GM12878 (cell line): ENCODE measurements at regions of chr1 and their contacts with region 1.

Region 1: DNA sequence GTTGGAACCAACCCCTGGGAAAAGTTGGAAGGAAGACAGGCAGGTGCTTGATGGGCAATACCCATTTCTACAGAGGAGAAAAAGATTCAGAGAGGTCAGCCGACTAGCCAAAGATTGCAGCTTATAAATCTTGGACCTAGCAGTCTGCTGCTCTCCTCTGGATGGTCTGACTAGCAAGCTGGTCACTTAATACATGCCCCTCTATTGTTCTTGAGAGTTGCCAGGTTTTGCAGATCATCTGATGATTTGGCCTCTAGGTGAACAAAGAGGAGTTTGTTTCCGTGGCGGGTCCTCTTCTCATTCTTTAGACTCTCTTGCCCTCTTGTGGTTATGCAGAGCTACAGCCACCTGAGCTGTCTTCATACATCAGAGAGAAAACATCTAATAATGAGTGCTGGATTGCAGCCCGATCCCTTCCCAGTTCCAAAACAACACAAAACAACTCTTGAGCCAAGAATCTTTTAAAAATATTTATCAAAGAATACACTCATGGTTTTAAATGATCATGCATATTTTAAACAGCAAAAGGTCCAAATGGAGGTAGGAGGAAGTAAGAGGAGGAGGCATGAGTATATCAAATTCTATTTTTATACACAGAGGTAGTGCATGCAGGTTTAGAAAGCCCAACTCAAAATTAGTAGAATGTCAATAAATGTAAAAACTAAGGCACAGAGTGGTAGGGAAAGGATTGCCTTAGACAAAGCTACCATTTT is 115.7 kb downstream of the SLC30A10 start:
- DNase-seq: no peak
- ATAC-seq: peak; percentile 96
- H3K4me3 ChIP-seq: no peak overlapping the region
- H3K27ac ChIP-seq: no peak overlapping the region
- H3K4me1 ChIP-seq: no peaks in the 10 kb centered on the region
- H3K27me3 ChIP-seq: peaks cover 0 to 4% of the 10 kb centered on the region in 2 experiments; a peak in 3 of 4 replicates
- CTCF ChIP-seq: peak; percentile 77 to 79 (median 79)
- EP300 ChIP-seq: no peak
- POLR2A ChIP-seq: no peak
- RAD21 ChIP-seq: peak; percentile 89

Region 2: GRCh38 chr1:218259800-218260199 is 1552.8 kb before region 1 on chr1:
- CTCF ChIA-PET with region 1: no interaction called
- POLR2A ChIA-PET with region 1: no interaction called
- RAD21 ChIA-PET with region 1: interaction called, 6 read pairs
- SMC1A ChIA-PET with region 1: no interaction called
- in situ Hi-C with region 1: no loop called
- intact Hi-C with region 1: loop called (anchors 1 kb)
- DNase-seq: no peak
- ATAC-seq: peak; percentile 82
- H3K4me3 ChIP-seq: no peak overlapping the region
- H3K27ac ChIP-seq: no peak overlapping the region
- H3K4me1 ChIP-seq: no peaks in the 10 kb centered on the region
- H3K27me3 ChIP-seq: no peaks in the 10 kb centered on the region
- CTCF ChIP-seq: peak; percentile 48 to 54 (median 53); a peak in 5 of 6 replicates
- EP300 ChIP-seq: no peak
- POLR2A ChIP-seq: no peak
- RAD21 ChIP-seq: peak; percentile 44; the same call in 1 of the 2 replicates

Region 3: DNA sequence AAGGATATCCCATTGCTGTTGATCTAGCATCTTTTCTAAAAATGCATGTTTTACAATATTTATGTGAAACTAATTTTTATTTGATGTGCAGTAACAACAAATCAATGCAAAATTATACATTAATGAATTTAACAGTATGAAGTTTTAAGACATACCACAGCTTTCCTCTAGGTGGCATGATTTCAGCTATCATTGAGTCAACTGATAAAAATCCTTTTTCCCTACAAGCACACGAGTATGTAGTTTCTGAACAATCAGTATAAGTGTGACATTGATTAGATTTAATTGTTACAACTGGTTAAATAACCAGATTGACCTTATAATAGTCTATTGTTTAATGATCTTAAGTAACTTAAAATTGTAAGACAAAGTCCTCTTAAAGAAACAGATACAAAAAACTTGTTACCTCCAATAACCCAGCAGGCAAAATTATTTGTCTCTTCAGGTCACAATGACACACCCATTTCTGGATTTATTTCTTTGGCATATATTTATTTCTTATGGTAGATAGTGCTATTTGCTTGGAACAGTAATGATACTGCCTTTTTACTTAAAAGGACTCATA is 1473.3 kb before region 1 on chr1:
- CTCF ChIA-PET with region 1: interaction called, 7 read pairs
- POLR2A ChIA-PET with region 1: no interaction called
- RAD21 ChIA-PET with region 1: interaction called, 3 read pairs
- SMC1A ChIA-PET with region 1: interaction called, 3 read pairs
- in situ Hi-C with region 1: loop called (anchors 10 kb)
- intact Hi-C with region 1: loop called (anchors 1 kb)
- DNase-seq: no peak
- ATAC-seq: peak; percentile 69
- H3K4me3 ChIP-seq: no peak overlapping the region
- H3K27ac ChIP-seq: no peak overlapping the region
- H3K4me1 ChIP-seq: no peaks in the 10 kb centered on the region
- H3K27me3 ChIP-seq: no peaks in the 10 kb centered on the region
- CTCF ChIP-seq: peak; percentile 58 to 65 (median 58)
- EP300 ChIP-seq: no peak
- POLR2A ChIP-seq: no peak
- RAD21 ChIP-seq: peak; percentile 58

Region 4: DNA sequence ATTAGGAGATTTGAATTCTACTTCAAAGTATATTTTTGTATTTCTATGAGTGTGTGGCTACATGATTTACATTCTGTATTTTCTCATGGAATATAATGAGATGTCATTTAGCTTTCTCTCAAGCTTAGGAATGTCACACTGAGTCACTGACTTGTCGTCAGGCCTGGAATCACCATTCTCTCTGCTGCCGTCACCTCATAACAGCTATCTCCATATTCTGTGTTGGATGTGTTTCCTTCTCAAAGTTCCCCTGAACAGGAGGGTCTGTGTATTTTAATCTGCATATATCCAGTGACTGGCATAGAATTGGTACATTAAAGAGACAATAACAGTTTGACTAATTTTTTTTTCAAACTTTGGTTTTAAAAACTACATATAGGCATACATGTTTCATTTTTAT is 603.1 kb before region 1 on chr1:
- CTCF ChIA-PET with region 1: no interaction called
- POLR2A ChIA-PET with region 1: no interaction called
- RAD21 ChIA-PET with region 1: no interaction called
- SMC1A ChIA-PET with region 1: interaction called, 3 read pairs
- in situ Hi-C with region 1: no loop called
- intact Hi-C with region 1: loop called (anchors 2 kb)
- DNase-seq: no peak
- ATAC-seq: no peak
- H3K4me3 ChIP-seq: no peak overlapping the region
- H3K27ac ChIP-seq: no peak overlapping the region
- H3K4me1 ChIP-seq: no peaks in the 10 kb centered on the region
- H3K27me3 ChIP-seq: no peaks in the 10 kb centered on the region
- CTCF ChIP-seq: no peak
- EP300 ChIP-seq: no peak
- POLR2A ChIP-seq: no peak
- RAD21 ChIP-seq: no peak

Region 5: DNA sequence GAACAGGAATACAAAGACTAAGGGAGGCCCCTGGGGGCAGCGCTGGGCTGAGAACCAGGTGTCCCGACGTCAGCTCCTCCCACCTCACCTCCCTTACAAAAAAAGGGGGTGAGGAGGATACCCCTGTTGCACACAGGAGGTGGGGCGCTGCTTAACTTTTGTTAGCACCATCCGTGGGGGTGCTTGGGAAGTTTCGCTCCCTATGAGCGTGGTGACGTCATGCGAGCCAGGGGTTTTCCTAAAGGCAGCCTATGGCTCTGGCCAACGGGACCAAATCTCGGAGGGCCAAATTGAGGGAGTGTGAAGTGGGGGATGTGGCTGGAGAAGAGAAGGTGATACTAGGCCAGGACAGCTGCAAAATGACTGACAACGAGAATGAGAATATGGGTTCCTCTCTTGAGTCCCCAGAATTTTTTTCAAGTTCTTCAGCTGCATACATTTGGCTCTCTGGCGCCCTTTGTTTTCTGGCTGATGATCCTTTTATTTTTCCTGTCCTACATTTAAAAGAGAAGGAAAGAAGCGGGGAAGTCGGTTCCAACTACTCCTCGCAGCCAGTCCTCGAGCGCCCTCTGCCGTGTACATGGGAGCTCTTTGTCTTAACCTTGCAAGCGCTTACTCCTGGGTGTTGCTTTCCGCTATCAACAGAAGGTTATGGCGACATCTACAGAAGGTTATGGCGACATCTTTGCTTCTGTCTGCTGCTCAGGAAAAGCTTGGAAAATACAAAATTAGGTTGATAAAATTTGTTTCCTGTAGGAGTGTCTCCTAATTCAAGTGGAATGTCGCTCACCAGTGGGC is 151.8 kb before region 1 on chr1:
- CTCF ChIA-PET with region 1: interaction called, 8 read pairs
- POLR2A ChIA-PET with region 1: no interaction called
- RAD21 ChIA-PET with region 1: interaction called, 3 read pairs
- SMC1A ChIA-PET with region 1: interaction called, 7 read pairs
- in situ Hi-C with region 1: no loop called
- intact Hi-C with region 1: loop called (anchors 5 kb)
- DNase-seq: peak; percentile 27
- ATAC-seq: peak; percentile 92
- H3K4me3 ChIP-seq: 0 out of 2 replicates have a peak overlapping the region, but pooled peaks have one; percentile 12
- H3K27ac ChIP-seq: no peak overlapping the region
- H3K4me1 ChIP-seq: peaks cover 16% of the 10 kb centered on the region
- H3K27me3 ChIP-seq: no peaks in the 10 kb centered on the region
- CTCF ChIP-seq: peak; percentile 84 to 88 (median 88)
- EP300 ChIP-seq: no peak
- POLR2A ChIP-seq: no peak
- RAD21 ChIP-seq: peak; percentile 89

Region 6: DNA sequence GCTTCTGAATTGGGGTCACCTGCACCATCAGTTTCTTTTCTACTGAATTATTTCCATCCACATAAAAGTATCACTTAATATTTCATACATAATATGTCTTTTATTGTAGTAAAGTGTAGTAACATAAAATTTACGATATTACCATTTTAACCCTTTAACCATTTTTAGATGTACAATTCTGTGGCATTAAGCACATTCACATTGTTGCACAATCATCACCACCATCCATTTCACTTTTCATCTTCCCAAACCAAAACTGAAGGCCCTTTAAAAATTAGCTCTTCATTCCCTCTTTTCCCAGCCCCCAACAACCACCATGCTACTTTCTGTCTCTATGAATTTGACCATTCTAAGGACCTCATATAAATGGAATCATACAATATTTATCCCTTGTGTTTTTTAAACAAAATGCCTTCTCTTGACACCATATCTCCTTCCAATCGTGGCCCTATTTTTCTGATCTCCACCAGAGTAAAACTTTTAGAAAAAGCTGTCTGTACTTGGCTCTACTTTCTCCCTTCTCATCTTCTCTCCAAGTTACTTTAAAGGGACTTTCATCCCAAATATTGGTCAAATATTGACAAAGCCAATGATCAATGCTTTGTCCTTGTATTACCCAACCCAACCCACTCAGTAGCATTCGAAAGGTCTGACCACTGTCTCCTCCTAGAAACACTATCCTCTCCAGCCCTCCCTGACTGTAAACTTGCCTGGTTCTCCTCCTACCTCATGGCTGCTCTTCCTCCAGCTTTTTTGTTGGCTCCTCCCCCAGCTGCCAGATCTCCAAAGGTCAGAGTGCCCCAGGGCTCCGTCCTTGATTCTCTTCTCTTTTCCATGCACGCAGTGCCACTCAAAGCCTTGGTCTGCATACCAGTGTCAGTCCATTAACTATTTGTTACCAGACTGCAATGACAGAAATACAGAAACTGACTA is 71.0 kb after region 1 on chr1:
- CTCF ChIA-PET with region 1: no interaction called
- POLR2A ChIA-PET with region 1: no interaction called
- RAD21 ChIA-PET with region 1: no interaction called
- SMC1A ChIA-PET with region 1: no interaction called
- in situ Hi-C with region 1: no loop called
- intact Hi-C with region 1: no loop called
- DNase-seq: no peak
- ATAC-seq: no peak
- H3K4me3 ChIP-seq: no peak overlapping the region
- H3K27ac ChIP-seq: no peak overlapping the region
- H3K4me1 ChIP-seq: no peaks in the 10 kb centered on the region
- H3K27me3 ChIP-seq: no peaks in the 10 kb centered on the region; a peak in 1 of 4 replicates
- CTCF ChIP-seq: no peak
- EP300 ChIP-seq: no peak
- POLR2A ChIP-seq: no peak
- RAD21 ChIP-seq: no peak